ENCODE measurements at regions of chr17 and their contacts with region 1.

Region 1: DNA sequence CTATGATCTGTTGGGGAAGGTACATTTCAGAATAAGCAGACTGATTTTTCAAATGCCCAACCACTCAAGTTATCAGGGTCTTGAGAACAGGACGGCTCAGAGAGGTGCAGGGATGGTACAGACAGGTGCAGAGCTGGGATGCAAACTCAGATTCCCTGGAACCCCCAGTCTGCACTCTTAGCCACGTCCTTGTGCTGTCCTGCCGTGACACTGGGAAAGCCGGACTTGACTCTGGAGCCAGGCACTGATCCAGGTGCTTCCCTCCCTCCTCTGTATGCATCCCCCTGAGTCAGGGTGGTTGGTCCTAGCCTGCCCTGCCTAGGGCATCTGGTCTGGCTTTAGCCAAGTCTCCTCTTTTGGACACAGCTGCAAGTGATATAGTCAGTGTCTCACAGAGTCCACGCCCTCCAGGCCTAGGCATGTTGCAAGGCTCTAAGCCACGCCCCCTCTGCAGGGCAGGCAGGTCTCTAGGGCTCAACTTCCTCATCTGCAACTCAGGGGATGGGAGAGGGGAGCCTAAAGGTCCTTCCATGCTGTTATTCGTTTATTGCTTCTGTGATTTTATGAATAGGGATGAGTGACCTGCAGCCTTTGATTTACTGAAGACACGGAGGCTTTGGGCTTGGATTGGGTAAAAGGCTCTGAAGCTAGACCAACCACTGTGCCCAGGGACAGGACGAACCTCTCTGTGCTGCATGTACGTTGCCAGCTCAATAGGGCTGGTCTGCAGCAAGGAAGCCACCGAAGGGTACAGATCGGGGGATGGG is 97.3 kb downstream of the SDK2 start:
- DNase-seq: peak; percentile 43
- ATAC-seq: peak; percentile 98
- H3K4me3 Mint-ChIP-seq: no peak overlapping the region
- H3K27ac Mint-ChIP-seq: no peak overlapping the region
- H3K4me1 Mint-ChIP-seq: peaks cover 40% of the 10 kb centered on the region
- H3K27me3 Mint-ChIP-seq: no peaks in the 10 kb centered on the region
- CTCF ChIP-seq: no peak

Region 2: DNA sequence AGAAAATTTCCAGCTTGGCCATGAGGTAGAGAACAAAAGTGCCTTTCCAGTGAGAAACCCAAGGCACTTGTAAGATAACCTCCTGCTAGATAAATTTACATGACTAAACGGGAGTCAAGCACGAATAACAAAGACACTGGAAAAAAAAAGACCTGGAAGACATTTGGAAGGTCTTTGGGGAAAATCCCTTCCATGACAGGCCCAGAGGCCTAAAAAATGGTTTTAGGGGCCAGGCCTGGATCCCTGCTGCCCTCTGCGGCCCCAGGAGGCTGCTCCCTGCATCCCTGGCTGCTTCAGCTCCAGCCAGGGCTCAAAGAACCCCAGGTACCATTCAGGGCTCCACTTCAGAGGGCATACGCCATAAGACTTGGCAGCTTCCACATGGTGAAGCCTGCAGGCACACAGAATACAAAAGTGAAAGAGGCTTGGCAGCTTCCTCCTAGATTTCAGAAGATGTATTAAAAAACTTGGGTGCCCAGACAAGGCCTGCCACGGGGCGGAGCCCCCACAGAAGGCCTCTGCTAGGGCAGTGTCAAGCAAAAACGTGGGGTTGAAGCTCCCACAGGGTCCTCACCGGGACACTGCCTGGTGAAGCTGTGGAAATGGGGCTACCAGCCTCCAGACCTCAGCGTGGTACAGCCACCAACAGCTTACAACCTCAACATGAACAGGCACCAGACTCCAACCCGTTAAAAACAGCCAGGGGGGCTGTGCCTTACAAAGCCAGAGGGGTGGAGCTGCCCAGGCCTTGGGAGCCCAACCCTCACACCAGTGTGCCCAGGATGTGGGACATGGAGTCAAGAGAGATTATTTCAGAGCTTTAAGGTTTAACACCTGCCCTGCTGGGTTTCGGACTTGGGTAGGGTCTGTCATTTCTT is 20.2 kb after region 1 on chr17:
- CTCF ChIA-PET with region 1: no interaction called
- POLR2A ChIA-PET with region 1: interaction called, 3 read pairs
- intact Hi-C with region 1: loop called (anchors 1 kb)
- DNase-seq: peak; percentile 51
- ATAC-seq: peak; percentile 89
- H3K4me3 Mint-ChIP-seq: peak overlapping the region; percentile 46
- H3K27ac Mint-ChIP-seq: peak overlapping the region; percentile 92
- H3K4me1 Mint-ChIP-seq: peaks cover 30% of the 10 kb centered on the region
- H3K27me3 Mint-ChIP-seq: no peaks in the 10 kb centered on the region
- CTCF ChIP-seq: no peak